BJ (cell line): ENCODE measurements at regions of chr7 and their contacts with region 1.

Region 1: GRCh38 chr7:32942786-32943653 is 14.2 kb upstream of the FKBP9 start:
- DNase-seq: peak; percentile 16
- H3K4me3 ChIP-seq: peak overlapping the region; percentile 67
- H3K27me3 ChIP-seq: no peaks in the 10 kb centered on the region
- CTCF ChIP-seq: peak; percentile 34

Region 2: DNA sequence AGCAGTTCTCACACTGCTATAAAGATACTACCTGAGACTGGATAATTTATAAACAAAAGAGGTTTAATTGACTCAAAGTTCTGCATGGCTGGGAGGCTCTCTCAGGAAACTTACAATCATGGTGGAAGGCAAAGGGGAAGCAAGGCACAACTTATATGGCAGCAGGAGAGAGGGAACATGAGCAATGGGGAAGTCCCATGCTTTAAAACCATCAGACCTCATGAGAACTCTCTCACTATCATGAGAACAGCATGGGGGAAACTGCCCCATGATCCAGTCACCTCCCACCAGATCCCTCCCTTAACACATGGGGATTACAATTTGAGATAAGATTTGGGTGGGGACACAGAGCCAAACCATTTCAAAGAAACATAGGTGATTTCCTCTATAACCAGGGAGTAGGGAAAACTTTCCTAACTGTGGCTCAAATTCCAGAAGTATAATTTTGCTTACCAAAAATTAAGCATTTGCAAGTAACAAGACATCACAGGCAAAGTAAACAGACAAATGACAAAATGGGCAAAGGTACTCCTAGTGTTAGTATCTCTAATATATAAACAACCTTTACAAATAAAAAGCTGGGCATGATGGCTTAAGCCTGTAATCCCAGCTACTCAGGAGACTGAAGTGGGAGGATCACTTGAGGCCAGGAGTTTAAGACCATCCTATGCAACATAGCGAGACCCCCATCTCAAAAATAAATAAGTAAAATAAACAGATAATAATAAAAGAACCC is 139.4 kb before region 1 on chr7:
- CTCF ChIA-PET with region 1: interaction called, 12 read pairs
- POLR2A ChIA-PET with region 1: no interaction called
- DNase-seq: no peak
- H3K4me3 ChIP-seq: no peak overlapping the region
- H3K27me3 ChIP-seq: no peaks in the 10 kb centered on the region
- CTCF ChIP-seq: no peak

Region 3: DNA sequence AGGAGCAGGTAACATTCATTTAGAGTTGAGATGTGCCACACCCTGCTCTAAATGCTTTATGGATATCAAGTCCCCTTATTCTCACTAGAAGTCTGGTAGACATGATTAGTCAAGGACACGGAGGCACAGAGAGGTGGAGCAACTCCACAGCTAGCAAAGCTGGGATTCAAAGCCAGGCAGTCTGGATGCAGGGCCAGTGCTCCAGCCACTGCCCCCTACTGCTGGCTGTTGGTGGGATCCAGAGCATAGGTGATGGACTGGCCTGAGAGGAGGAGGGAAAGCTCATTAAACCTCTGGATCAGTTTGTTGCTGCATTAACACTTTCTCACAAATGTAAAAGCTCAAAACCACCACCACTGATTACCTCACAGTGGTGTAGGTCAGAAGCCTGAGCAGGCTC is 28.8 kb before region 1 on chr7:
- CTCF ChIA-PET with region 1: no interaction called
- POLR2A ChIA-PET with region 1: no interaction called
- DNase-seq: no peak
- H3K4me3 ChIP-seq: no peak overlapping the region
- H3K27me3 ChIP-seq: no peaks in the 10 kb centered on the region
- CTCF ChIP-seq: 0 out of 2 replicates have a peak, but pooled peaks have one; percentile 19

Region 4: DNA sequence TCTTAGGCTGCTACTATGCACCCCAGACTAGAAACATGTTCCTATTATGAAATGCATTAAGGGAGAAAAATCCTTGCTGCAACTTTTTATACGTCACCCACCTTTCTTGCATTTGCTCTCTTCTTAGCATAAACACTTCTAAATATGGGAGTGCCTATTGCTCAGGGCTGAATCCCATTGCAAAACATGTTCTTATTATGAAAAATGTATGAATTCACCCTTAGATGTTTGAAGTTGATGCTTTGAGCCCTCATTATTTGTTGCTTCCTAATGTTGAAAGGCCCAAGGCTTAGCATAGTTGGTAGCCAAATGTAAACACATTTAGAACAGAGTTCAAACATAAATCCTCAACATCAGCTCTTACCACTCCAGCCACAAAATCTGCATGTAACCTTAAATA is 1015.1 kb after region 1 on chr7:
- CTCF ChIA-PET with region 1: no interaction called
- POLR2A ChIA-PET with region 1: interaction called, 11 read pairs
- DNase-seq: no peak
- H3K4me3 ChIP-seq: no peak overlapping the region
- H3K27me3 ChIP-seq: no peaks in the 10 kb centered on the region
- CTCF ChIP-seq: no peak